IMR-90 (cell line): ENCODE measurements at regions of chr7 and their contacts with region 1.

Region 1: DNA sequence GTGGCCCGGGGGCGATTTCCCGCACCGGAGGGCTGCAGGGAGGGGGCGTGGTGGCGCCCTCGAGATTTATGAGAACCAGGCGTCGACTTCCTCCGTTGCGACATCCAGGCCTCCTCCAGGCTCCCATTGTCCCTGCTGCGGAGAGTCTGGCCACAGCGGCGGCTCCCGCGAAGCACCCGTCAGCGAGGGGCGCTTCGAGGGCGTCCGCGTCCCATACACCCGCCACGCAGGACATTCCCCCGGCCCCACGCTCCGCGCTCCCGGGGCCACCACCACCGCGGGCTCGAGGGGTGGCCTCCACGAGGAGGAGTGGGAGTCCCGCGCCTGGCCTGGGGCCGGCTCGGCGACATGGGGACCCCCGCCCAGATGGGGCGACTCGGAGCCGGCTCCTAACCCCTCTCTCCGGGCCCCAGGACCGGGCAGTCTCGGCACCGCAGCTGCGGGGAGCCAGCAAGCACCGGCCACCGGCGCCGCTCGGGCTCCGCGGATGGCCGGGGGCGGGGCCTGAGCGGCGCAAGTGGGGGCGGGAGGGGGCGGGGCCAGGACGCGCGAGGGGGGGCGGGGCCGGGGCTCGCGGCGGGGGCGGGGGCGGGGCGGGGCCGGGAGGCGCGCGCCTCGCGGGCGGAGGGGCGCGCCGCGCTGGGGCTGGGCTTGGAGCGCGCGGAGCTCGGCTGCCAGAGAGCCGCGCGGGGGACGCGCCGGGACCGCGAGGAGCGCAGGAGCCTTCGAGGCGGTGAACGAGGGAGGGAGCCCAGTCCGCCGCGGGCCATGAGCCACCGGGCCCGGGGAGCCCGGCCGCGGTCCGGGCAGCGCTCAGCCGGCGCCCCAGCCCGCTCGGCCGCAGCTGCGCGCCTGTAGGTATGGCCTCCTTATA is at the start of gene SH2B2:
- DNase-seq: peak; percentile 49
- ATAC-seq: peak; percentile 77
- H3K4me3 ChIP-seq: peak within 1 kb of the TSS; percentile 97
- H3K27ac ChIP-seq: peak within 1 kb of the TSS; percentile 62
- H3K4me1 ChIP-seq: peaks cover 4% of the 10 kb centered on the region; the same call in 1 of the 2 replicates
- H3K27me3 ChIP-seq: no peaks in the 10 kb centered on the region
- CTCF ChIP-seq: 0 out of 2 replicates have a peak, but pooled peaks have one; percentile 6
- POLR2A ChIP-seq: peak; percentile 59; the same call in 1 of the 2 replicates
- RAD21 ChIP-seq: no peak
- total RNA-seq, gene SH2B2: 0.36 and 0.56 TPM in 2 replicates

Region 2: GRCh38 chr7:101650579-101651081 is 635.8 kb before region 1 on chr7:
- CTCF ChIA-PET with region 1: no interaction called
- POLR2A ChIA-PET with region 1: no interaction called
- dilution Hi-C with region 1: no loop called
- in situ Hi-C with region 1: no loop called
- intact Hi-C with region 1: no loop called
- DNase-seq: no peak
- ATAC-seq: no peak
- H3K4me3 ChIP-seq: peak overlapping the region; percentile 16
- H3K27ac ChIP-seq: no peak overlapping the region
- H3K4me1 ChIP-seq: peaks cover 3% of the 10 kb centered on the region; the same call in 1 of the 2 replicates
- H3K27me3 ChIP-seq: peaks cover 38% of the 10 kb centered on the region
- CTCF ChIP-seq: no peak
- POLR2A ChIP-seq: no peak
- RAD21 ChIP-seq: no peak

Region 3: DNA sequence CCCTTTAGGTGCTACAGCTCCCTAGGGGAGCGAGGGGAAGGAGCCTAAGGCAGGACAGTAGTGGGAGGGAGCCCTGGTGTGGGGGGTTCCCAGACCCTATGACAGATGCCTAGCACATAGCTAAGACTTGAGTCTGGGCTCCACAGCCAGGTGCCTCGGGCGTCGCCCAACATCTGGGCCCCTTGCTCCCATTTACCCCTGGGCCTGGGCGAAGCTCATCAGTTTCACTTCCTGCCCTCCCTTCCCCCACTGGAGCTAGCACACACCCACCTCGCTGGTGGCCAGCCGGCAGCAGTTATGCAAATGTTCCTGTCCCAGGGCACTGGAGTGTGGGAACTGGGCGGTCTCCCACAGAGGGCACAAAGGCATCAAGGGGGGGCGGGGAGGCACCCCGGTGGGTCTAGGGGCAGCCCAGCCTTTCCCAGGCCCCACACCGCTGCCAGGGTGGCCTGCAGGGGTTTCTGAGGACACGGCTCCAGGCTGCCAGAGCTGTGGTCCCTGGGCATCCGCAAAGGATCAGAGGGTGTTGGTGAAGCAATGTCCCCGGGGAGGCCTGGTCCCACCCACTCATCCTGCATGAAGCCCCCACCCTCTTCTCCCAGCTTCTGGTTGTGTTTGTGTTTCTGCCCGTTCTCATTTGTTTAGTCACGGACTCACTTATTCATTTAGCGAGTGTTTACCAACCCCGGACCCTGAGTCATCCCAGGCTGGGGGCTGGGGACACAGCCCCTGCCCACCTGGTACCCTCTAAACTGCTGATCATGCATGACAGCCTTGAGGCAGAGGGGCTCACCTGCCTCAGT is 20.6 kb after region 1 on chr7:
- CTCF ChIA-PET with region 1: no interaction called
- POLR2A ChIA-PET with region 1: no interaction called
- dilution Hi-C with region 1: no loop called
- in situ Hi-C with region 1: no loop called
- intact Hi-C with region 1: loop called (anchors 2 kb)
- DNase-seq: peak; percentile 78
- ATAC-seq: peak; percentile 91
- H3K4me3 ChIP-seq: no peak overlapping the region
- H3K27ac ChIP-seq: peak overlapping the region; percentile 31
- H3K4me1 ChIP-seq: peaks cover 11% of the 10 kb centered on the region
- H3K27me3 ChIP-seq: no peaks in the 10 kb centered on the region
- CTCF ChIP-seq: no peak
- POLR2A ChIP-seq: no peak
- RAD21 ChIP-seq: no peak